Activated CD8-positive, alpha-beta memory T cell treated with anti-CD3 and anti-CD28 coated beads, Interleukin-2, amount 10 ng/mL, durations not matched to agents 7 days and 5 days (primary cell): ENCODE measurements at regions of chr1 and their contacts with region 1.

Region 1: GRCh38 chr1:28088168-28088961 is at the start of gene EYA3:
- DNase-seq: peak; percentile 99
- ATAC-seq: peak; percentile 89
- H3K4me3 Mint-ChIP-seq: peak within 1 kb of the TSS; percentile 97
- H3K27ac Mint-ChIP-seq: peak within 1 kb of the TSS; percentile 97
- H3K4me1 Mint-ChIP-seq: peaks cover 36% of the 10 kb centered on the region
- H3K27me3 Mint-ChIP-seq: peaks cover 6% of the 10 kb centered on the region
- total RNA-seq, gene EYA3: 33.2 to 33.4 TPM

Region 2: GRCh38 chr1:28112388-28113241 is 24.2 kb after region 1 on chr1:
- CTCF ChIA-PET with region 1: interaction called, 11 read pairs
- DNase-seq: no peak
- ATAC-seq: no peak
- H3K4me3 Mint-ChIP-seq: no peak overlapping the region
- H3K27ac Mint-ChIP-seq: no peak overlapping the region
- H3K4me1 Mint-ChIP-seq: peaks cover 34% of the 10 kb centered on the region
- H3K27me3 Mint-ChIP-seq: peaks cover 44% of the 10 kb centered on the region

Region 3: DNA sequence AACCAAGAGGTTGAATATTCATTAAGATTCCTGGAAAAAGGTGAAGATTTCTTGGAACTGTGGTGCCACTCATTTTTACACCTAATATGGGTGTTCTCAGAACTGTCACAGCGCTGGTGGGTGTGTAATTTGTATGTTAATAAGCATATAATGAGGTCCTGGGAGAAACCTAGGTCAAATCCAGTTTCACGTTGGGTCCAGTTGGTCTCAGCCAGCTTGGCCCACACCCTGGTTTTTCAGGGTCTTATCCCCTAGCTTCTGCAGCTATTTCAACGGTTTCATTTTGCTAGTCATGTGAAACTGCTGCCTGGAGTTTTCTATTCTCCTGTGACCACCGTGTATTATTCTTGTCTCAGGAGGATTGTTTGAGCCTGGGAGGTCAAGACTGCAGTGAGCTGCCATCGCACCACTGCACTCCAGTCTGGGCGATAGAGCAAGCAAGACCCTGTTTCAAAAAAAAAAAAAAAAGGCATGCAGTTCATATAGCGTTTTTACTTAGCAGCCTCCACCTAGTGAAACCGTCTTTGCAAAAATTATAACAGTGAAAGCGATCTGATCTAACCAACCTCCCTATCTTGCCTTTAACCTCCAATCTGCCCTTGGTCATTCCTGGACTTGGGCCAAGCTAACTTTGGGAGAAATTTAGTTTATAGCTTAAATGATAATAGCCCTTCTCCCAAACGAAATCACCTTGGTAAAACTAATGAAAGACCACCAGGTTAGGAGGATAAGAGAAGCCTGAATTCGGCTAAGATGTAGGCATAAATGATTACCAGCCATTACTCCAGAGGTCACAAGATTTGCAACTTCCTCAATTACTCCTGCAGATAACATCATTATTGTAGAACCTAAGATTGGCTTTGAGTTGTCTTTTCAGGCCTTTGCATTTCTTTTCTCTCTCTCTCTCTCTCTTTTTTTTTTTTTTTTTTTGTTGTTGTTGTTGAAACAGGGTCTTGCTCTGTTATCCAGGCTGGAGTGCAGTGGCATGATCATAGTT is 44.1 kb after region 1 on chr1:
- CTCF ChIA-PET with region 1: no interaction called
- DNase-seq: no peak
- ATAC-seq: no peak
- H3K4me3 Mint-ChIP-seq: no peak overlapping the region
- H3K27ac Mint-ChIP-seq: no peak overlapping the region
- H3K4me1 Mint-ChIP-seq: peaks cover 12% of the 10 kb centered on the region
- H3K27me3 Mint-ChIP-seq: peaks cover 85% of the 10 kb centered on the region

Region 4: GRCh38 chr1:28199328-28200233 is 111.2 kb after region 1 on chr1:
- CTCF ChIA-PET with region 1: interaction called, 21 read pairs
- DNase-seq: peak; percentile 97
- ATAC-seq: peak; percentile 88
- H3K4me3 Mint-ChIP-seq: peak overlapping the region; percentile 55
- H3K27ac Mint-ChIP-seq: peak overlapping the region; percentile 97
- H3K4me1 Mint-ChIP-seq: peaks cover 56% of the 10 kb centered on the region
- H3K27me3 Mint-ChIP-seq: no peaks in the 10 kb centered on the region

Region 5: DNA sequence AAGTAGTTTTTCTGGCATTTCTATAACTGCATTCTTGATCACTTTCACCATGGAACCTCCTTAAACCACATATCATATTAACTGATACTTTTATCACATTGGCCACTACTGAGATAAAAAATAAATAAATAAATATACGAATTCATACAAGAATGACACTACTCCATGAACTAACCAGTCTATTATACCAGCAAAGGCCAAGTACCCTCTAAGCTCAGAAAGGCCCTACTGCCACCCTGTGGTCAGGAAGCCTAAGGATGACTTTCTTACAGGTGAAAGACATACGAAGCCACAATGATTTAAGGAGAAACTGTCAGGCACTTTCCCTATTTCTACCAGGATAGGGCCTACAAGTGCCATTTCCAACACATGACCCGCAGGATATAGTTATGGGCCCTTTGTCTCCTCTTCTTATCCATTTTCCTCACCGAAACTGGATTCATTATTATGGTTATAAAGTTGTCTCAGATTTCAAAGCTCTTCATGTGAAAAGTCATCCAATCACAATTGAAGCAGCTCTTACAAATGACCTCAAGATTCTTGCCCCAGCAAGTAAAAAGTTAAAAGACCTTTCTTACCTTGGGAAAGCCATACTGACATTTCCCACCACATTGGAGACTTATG is 120.6 kb after region 1 on chr1:
- CTCF ChIA-PET with region 1: interaction called, 206 read pairs
- DNase-seq: peak; percentile 84
- ATAC-seq: peak; percentile 93
- H3K4me3 Mint-ChIP-seq: no peak overlapping the region
- H3K27ac Mint-ChIP-seq: no peak overlapping the region
- H3K4me1 Mint-ChIP-seq: peaks cover 8% of the 10 kb centered on the region
- H3K27me3 Mint-ChIP-seq: no peaks in the 10 kb centered on the region

Region 6: GRCh38 chr1:28341591-28341990 is 253.2 kb after region 1 on chr1:
- CTCF ChIA-PET with region 1: no interaction called
- DNase-seq: no peak
- ATAC-seq: no peak
- H3K4me3 Mint-ChIP-seq: no peak overlapping the region
- H3K27ac Mint-ChIP-seq: no peak overlapping the region
- H3K4me1 Mint-ChIP-seq: peaks cover 11% of the 10 kb centered on the region
- H3K27me3 Mint-ChIP-seq: no peaks in the 10 kb centered on the region